Motor neuron (in vitro differentiated cells): ENCODE measurements at regions of chr6 and their contacts with region 1.

Region 1: DNA sequence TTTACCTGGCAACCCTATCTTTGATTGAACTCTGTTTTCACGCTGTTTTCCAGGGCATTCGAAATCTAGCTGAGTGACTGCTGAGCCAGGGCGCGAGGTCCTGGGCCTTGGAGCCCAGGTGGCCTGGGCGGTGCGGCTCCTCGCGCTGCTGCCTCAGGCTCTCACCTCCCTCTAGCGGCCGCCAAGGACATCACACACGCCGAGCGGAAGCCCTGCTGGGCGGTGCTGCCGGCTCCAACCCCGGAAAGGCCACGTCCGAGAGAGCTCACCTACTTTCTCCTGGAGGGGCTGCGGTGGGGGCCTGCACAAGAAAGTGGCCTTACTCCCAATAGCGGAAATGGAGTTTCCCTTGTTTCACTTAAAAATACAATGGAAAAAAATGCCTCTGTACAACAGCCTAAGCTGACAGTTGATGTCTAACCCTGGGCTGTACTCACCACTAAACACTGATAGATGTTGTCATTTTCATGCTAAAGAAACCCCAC is 77.7 kb downstream of the ELOVL4 start:
- ATAC-seq: peak; percentile 96 to 99 (median 97)
- H3K4me3 ChIP-seq: peak overlapping the region in 1 of 5 donors; percentile 19
- H3K27ac ChIP-seq: no peak overlapping the region
- H3K4me1 ChIP-seq: peaks cover 13% of the 10 kb centered on the region in 2 donors

Region 2: DNA sequence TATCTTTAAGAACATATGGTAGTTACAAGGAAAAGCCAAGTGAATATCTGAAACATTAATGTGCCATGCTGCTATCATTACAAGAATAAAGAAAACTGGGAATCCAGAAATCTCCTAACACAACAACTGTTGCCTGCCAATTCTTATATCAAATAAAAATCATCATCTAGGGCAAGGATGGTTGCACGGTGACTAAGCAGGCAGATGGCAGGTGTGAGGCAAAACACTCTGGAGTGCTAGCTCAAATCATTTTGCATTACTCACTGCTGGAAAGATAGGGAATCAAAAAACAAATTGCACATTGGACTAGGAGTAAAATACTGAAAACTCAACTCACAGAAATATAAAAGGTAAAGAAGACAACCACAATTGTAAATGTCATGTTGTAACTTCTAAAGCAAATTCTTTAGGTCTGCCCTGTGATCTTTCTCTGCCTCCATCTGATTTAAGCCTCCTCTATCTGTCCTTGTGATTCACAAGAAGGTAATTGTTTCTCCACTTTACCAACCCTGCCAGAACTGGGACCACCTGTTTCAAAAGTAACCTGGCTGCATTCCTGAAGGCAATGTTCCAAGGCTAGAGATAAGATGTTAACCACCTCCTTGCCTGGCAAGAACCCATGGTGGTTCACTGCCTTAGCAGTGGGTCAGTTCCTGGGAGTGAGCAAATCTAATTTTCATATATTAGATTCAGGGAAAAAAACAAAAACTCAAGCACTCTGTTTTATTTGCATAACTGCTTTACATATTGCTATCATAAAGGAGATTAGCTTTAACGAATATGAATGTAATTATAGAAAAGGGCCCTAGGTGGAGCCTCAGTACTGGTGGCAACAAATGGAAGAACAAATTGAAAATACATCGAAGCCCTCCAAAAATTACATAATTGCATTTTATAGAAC is 299.3 kb before region 1 on chr6:
- in situ Hi-C with region 1: loop called in 2 of 9 experiments (anchors 25 kb)
- ATAC-seq: peak in 4 of 8 experiments; percentile 24 to 81 (median 62)
- H3K4me3 ChIP-seq: no peak overlapping the region
- H3K27ac ChIP-seq: no peak overlapping the region
- H3K4me1 ChIP-seq: no peaks in the 10 kb centered on the region

Region 3: GRCh38 chr6:79586548-79586947 is 283.1 kb before region 1 on chr6:
- in situ Hi-C with region 1: loop called in 1 of 9 experiments (anchors 25 kb)
- ATAC-seq: peak in 3 of 8 experiments; percentile 74 to 80 (median 77)
- H3K4me3 ChIP-seq: no peak overlapping the region
- H3K27ac ChIP-seq: no peak overlapping the region
- H3K4me1 ChIP-seq: no peaks in the 10 kb centered on the region